Activated CD8-positive, alpha-beta T cell treated with anti-CD3 and anti-CD28 coated beads for 36 hours (primary cell): ENCODE measurements at regions of chr22 and their contacts with region 1.

Region 1: DNA sequence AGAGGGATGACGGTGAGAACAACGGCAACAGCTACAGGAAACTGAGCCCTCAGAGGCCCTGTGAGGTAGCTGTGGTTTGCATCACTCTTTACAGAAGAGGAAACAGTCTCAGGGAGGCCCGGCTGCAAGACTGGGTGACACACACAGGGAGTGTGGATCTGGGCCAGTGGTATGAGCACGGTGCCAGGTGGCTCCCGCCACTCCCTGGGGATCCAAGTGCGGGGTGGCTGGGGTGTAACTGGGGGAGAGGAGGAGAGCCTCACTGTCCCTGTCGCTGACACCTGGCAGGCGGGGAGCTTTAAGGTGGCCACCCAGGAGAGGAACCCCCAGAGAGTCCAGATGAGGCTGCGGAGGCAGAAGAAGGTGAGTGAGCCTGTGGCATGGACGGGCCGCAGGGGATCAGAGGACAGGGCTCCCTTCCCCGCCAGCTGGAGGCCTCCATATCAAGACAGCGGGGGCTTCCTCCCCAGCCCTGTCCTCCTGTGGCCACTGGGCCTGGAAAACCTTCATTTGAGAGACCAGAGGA is 5.6 kb downstream of the RGL4 start:
- DNase-seq: peak; percentile 93
- ATAC-seq: peak; percentile 99
- H3K4me3 Mint-ChIP-seq: peak overlapping the region; percentile 80
- H3K27ac Mint-ChIP-seq: peak overlapping the region; percentile 100
- H3K4me1 Mint-ChIP-seq: peaks cover 48% of the 10 kb centered on the region
- H3K27me3 Mint-ChIP-seq: no peaks in the 10 kb centered on the region
- CTCF ChIP-seq: no peak

Region 2: DNA sequence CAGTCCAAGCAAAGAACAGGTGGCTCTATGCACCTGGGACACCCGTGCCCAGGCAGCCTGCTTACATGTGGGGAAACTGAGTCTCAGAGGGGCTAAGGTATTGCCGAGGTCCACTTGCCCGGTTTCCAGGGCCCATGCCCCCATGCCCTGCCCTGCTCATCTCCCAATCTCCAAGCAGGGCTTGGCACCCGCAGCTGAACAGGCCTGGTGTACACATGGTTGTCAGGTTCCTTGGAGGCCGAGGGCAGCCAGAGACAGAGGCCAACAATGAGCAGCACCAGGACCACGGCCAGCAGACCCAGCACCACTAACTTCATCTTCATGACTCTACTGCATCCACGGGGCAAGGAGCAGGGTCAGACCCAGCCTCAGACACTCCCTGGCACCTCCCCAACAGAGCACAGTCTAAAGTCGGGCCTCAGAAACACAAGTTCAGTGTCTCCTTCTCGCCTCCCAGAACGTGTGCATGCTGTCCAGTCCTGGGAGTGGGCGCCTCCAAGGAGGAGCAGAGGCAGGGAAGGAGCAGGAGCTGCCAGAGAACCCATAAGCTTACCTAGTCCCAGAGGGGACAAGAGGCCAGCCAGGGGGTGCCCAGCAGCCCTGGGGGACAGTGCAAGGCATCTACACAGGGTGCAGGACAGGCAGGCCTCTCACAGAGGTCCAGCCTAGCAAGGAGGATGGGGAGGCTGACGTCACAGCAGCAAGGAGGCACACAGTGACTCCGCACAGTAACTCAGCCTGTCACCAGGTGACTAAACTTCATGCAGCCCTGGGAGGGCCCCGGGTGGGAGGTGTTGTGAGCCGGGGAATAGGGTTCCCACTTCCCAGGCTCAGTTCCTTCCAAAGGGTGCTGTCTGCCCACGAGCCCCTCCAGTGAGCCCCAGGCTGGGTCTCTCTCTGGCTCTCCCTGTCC is 25.8 kb before region 1 on chr22:
- CTCF ChIA-PET with region 1: no interaction called
- POLR2A ChIA-PET with region 1: no interaction called
- intact Hi-C with region 1: no loop called
- DNase-seq: no peak
- ATAC-seq: no peak
- H3K4me3 Mint-ChIP-seq: no peak overlapping the region
- H3K27ac Mint-ChIP-seq: no peak overlapping the region
- H3K4me1 Mint-ChIP-seq: no peaks in the 10 kb centered on the region
- H3K27me3 Mint-ChIP-seq: no peaks in the 10 kb centered on the region
- CTCF ChIP-seq: no peak

Region 3: DNA sequence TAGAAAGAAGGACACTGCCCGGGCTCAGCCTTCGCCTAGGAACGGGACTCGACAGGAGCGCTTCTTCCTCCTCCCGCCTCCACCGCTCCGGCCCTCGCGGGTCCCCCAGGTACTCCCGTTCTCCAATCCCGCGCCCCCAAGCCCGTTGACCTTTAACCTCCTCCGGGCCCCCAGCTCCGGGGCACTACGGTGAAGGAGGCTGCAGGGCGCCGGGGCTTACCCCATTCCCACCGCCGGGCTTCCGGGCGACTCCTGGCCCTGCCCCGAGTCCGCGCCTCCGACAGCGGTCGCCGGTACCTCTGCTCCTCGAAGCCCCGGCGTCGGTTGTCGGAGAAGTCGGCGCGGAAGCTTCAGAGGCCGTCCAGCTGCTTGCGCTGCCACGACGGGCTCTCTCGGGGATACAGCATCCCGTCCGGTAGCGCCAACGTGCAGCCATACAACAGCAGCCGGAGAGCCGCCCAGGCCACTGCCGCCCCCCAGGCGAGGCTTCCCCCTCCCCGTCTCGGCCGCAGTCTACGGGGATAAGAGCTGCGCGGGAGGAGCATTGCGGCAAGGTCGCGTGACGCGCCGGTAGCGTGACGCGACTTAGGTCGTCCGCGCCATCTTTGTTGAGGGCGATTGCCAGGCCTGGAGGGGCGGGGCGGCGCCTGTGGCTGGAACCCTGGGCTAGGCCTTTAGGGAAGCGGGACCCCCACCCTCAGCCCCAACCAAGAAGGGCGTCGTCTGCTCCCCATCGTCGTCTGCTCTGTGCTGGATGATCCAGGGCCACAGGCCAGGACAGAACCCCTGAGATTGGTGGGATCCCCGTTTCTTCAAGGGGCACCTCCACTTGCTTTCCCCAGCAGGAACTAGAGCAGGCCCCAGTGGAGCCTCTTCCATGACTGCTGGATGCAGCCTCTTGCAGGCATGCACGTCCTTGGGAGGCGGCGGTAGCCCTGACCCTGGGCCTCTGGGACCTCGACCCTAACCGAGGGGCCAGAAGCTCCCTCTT is 20.7 kb after region 1 on chr22:
- CTCF ChIA-PET with region 1: no interaction called
- POLR2A ChIA-PET with region 1: interaction called, 27 read pairs
- intact Hi-C with region 1: no loop called
- DNase-seq: peak; percentile 85
- ATAC-seq: peak; percentile 91
- H3K4me3 Mint-ChIP-seq: peak overlapping the region; percentile 75
- H3K27ac Mint-ChIP-seq: peak overlapping the region; percentile 87
- H3K4me1 Mint-ChIP-seq: peaks cover 20% of the 10 kb centered on the region
- H3K27me3 Mint-ChIP-seq: no peaks in the 10 kb centered on the region
- CTCF ChIP-seq: no peak

Region 4: GRCh38 chr22:23862103-23862502 is 165.7 kb after region 1 on chr22:
- CTCF ChIA-PET with region 1: no interaction called
- POLR2A ChIA-PET with region 1: no interaction called
- intact Hi-C with region 1: no loop called
- DNase-seq: peak; percentile 69
- ATAC-seq: peak; percentile 31
- H3K4me3 Mint-ChIP-seq: no peak overlapping the region
- H3K27ac Mint-ChIP-seq: no peak overlapping the region
- H3K4me1 Mint-ChIP-seq: peaks cover 9% of the 10 kb centered on the region
- H3K27me3 Mint-ChIP-seq: no peaks in the 10 kb centered on the region
- CTCF ChIP-seq: peak; percentile 67

Region 5: DNA sequence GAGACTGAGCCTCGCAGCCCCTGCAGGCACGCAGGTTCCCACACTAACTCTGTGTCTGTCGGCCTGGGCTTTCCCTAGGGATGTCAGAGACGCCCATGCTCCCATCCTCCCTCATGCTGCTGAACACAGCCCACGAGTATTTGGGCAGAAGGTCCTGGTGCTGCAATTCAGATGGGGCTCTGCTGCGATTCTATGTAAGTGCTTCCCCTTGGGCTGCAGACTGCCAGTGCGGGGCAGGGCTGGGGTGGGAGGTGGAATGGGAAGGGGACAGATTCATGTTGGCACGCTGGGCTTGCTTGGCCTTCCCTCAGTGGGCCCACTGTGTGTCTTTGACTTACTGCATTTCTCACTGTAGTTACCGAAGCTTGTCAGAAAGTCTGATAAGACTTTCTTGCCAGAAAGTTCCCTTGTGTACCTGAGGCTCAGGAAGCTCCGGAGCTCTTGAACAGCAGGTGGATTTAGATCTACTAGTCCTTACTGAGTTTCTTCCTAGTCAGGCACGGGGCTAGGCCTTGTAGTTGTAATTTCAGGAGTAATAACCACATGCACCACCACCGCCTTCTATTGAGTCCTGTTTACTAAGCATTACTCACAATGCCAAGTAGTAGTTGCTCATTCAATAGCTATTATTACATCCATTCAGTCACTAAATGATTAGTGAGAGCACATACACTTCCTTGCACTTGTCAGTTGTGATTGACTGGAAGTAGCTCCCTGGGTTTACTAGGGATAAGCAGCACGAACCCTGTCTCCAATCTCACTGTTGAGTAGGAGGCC is 379.9 kb after region 1 on chr22:
- CTCF ChIA-PET with region 1: no interaction called
- POLR2A ChIA-PET with region 1: no interaction called
- intact Hi-C with region 1: loop called (anchors 10 kb)
- DNase-seq: no peak
- ATAC-seq: no peak
- H3K4me3 Mint-ChIP-seq: no peak overlapping the region
- H3K27ac Mint-ChIP-seq: no peak overlapping the region
- H3K4me1 Mint-ChIP-seq: no peaks in the 10 kb centered on the region
- H3K27me3 Mint-ChIP-seq: no peaks in the 10 kb centered on the region
- CTCF ChIP-seq: no peak